ENCODE measurements at regions of chr21 and their contacts with region 1.

Region 1: DNA sequence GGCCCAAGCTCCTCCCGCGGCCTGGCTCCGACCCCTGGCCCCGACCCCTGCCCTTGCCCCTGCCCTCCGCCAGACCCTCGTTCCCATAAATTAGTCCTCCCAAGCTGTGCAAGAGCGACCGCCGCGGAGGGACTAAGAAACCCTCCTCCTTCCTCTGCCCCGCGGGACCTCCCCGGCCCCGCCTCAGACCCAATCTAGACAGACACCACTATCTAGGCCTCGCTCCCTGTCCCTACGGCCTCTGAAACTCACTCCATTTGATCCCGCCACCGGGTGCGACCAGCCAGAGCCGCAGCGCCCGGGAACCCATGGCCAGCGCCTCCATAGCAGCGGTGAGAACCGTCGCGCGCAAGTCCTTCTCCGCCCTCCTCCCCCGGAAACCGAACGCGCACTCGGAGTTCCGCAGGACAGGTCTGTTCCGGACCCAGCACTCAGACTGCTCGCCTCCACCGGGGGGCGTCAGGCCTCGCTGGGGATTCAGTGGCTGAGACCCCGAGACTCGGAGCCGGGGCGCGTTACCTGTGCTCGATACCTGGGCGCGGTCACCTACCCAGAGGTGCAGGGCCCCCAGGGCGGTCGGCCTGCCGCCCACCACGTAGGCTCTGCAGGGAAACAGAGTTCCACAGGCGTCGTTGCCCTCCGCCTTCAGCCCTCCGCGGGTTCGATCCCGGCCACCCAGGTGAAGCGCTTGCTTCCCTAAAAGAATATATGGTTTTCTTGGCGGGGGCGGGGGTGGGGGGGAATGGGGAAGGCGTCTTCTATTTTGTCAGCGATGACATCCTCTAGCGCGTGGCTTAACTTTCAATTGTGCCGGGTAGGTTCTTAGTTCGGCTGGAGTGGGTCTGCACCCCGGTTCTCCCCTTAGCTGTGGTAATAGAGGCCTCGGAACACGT is at the start of gene MRPL39:
- DNase-seq: peak; percentile 95
- ATAC-seq: peak; percentile 95
- H3K4me3 Mint-ChIP-seq: peak within 1 kb of the TSS; percentile 97
- H3K27ac Mint-ChIP-seq: peak within 1 kb of the TSS; percentile 100
- H3K4me1 Mint-ChIP-seq: peaks cover 37% of the 10 kb centered on the region
- H3K27me3 Mint-ChIP-seq: no peaks in the 10 kb centered on the region
- total RNA-seq, gene MRPL39: 78.4 to 84.5 TPM

Region 2: DNA sequence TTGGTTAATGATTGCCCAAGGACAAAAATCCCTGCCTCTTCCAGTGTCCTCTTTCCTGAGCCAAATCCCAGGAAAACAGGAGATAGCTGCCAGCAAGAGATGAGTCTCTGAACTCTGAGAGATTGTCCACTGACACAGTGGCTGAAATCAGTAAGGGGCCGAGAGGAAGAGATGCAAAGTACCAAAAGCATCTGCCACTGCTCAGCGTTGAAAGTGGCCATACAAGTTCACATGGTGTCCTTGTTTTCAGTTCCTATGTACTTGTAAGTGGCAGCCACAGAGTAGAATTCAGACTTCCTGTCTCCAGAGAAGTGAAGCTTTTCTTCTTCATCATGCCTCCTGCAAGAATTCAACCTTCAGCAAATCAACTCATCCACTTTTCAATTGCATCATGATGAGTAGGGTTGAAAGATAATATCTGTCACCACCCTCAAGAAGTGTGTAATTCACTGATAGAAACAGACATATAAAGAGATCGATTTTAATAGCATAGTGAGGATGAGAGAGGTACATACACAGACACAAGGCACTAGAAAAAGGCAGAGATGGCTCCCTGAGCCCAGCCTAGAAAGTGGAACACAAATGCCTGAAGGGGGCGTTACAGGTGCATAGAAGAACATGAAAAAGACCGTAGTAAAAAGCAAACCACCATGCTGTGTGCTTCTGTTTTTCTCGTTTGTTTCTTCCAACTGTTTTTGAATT is 185.9 kb before region 1 on chr21:
- CTCF ChIA-PET with region 1: interaction called, 4 read pairs
- POLR2A ChIA-PET with region 1: interaction called, 4 read pairs
- intact Hi-C with region 1: loop called in 1 of 2 experiments (anchors 1 kb)
- DNase-seq: peak; percentile 82
- ATAC-seq: peak; percentile 96
- H3K4me3 Mint-ChIP-seq: peak overlapping the region; percentile 59
- H3K27ac Mint-ChIP-seq: peak overlapping the region; percentile 94
- H3K4me1 Mint-ChIP-seq: peaks cover 74% of the 10 kb centered on the region
- H3K27me3 Mint-ChIP-seq: no peaks in the 10 kb centered on the region

Region 3: GRCh38 chr21:25639551-25640201 is 32.3 kb after region 1 on chr21:
- CTCF ChIA-PET with region 1: interaction called, 16 read pairs
- POLR2A ChIA-PET with region 1: no interaction called
- intact Hi-C with region 1: loop called (anchors 1 kb)
- DNase-seq: peak; percentile 63
- ATAC-seq: peak; percentile 76
- H3K4me3 Mint-ChIP-seq: peak overlapping the region; percentile 62
- H3K27ac Mint-ChIP-seq: no peak overlapping the region
- H3K4me1 Mint-ChIP-seq: peaks cover 28% of the 10 kb centered on the region
- H3K27me3 Mint-ChIP-seq: peaks cover 47% of the 10 kb centered on the region

Region 4: DNA sequence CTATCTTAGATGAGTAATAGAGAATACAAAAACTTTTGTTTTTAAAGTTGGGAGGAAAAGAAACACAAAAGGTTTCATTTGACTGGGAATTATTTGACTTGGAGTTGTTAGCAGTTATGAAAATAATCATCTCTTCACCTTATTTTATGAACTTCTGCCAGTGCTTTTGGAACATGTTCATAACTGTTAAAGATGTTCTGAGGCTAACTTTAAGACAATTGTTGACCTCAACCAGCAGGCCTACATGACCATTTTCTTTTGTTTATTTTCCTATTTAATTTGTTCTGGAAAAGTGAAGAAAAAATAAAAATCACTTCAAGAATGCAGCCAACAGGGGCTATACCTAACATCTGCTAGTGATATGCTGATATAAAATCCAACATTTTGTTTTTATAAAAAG is 69.1 kb after region 1 on chr21:
- CTCF ChIA-PET with region 1: no interaction called
- POLR2A ChIA-PET with region 1: no interaction called
- intact Hi-C with region 1: no loop called
- DNase-seq: no peak
- ATAC-seq: no peak
- H3K4me3 Mint-ChIP-seq: no peak overlapping the region
- H3K27ac Mint-ChIP-seq: no peak overlapping the region
- H3K4me1 Mint-ChIP-seq: no peaks in the 10 kb centered on the region
- H3K27me3 Mint-ChIP-seq: peaks cover 2% of the 10 kb centered on the region

Region 5: GRCh38 chr21:25717491-25718147 is 110.2 kb after region 1 on chr21:
- CTCF ChIA-PET with region 1: interaction called, 20 read pairs
- POLR2A ChIA-PET with region 1: no interaction called
- intact Hi-C with region 1: no loop called
- DNase-seq: no peak
- ATAC-seq: no peak
- H3K4me3 Mint-ChIP-seq: no peak overlapping the region
- H3K27ac Mint-ChIP-seq: no peak overlapping the region
- H3K4me1 Mint-ChIP-seq: no peaks in the 10 kb centered on the region
- H3K27me3 Mint-ChIP-seq: no peaks in the 10 kb centered on the region

Region 6: DNA sequence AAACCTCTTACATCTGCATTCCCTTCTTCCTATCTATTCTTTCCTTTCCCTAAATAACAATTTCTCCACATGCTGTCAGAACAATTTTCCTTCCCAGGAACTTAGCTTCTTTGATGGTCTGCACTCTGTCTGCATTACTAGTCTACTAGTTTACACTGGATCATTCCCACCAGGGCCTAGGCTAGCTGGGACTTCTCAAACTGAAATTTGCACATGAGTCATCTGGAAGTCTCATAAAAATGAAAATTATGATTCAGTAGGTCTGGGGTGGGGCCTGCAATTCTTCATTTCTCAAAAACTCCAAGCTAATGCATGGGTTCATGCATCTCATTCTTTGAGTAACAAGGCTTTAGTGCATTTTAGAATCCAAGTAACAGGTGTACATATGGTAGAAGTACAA is 201.6 kb after region 1 on chr21:
- CTCF ChIA-PET with region 1: interaction called, 3 read pairs
- POLR2A ChIA-PET with region 1: no interaction called
- intact Hi-C with region 1: loop called in 1 of 2 experiments (anchors 2 kb)
- DNase-seq: peak; percentile 38
- ATAC-seq: peak; percentile 95
- H3K4me3 Mint-ChIP-seq: no peak overlapping the region
- H3K27ac Mint-ChIP-seq: peak overlapping the region; percentile 7
- H3K4me1 Mint-ChIP-seq: peaks cover 14% of the 10 kb centered on the region
- H3K27me3 Mint-ChIP-seq: no peaks in the 10 kb centered on the region

Region 7: DNA sequence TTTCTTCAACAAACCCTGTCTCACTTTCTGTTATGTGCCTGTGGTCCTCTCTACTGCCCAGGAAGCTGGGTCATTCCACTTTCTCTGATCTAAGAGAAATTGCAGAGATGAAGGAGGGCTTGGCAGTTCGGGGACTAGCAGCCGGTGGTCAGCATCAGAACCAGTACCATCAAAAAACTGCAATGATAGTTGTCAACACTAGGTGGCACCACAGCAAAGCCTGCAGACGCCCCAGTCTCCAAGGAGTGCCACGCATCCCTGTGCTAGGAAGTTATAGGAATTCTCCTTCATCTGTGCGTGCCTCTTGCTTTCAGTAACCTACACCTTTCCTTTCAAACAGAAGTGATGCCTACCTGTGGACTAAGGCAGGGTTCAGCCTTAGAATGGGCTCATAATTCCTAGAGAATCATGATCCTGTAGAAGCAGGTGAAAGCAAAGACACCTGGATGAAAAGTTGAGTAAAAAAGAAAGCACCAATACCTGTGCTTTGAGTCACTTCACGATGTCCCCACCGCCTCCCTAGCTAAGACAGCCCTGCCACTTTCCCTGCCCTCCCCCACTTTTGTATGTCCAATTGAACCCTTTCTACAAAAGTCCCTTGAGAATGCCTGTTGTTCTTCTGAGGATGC is 1108.6 kb after region 1 on chr21:
- CTCF ChIA-PET with region 1: no interaction called
- POLR2A ChIA-PET with region 1: no interaction called
- intact Hi-C with region 1: loop called (anchors 1 to 5 kb)
- DNase-seq: peak; percentile 41
- ATAC-seq: no peak
- H3K4me3 Mint-ChIP-seq: no peak overlapping the region
- H3K27ac Mint-ChIP-seq: no peak overlapping the region
- H3K4me1 Mint-ChIP-seq: peaks cover 3% of the 10 kb centered on the region
- H3K27me3 Mint-ChIP-seq: peaks cover 10% of the 10 kb centered on the region

Measured in activated CD4-positive, alpha-beta T cell treated with anti-CD3 and anti-CD28 coated beads for 36 hours (primary cell).